H1 (cell line): ENCODE measurements at regions of chr1 and their contacts with region 1.

Region 1: DNA sequence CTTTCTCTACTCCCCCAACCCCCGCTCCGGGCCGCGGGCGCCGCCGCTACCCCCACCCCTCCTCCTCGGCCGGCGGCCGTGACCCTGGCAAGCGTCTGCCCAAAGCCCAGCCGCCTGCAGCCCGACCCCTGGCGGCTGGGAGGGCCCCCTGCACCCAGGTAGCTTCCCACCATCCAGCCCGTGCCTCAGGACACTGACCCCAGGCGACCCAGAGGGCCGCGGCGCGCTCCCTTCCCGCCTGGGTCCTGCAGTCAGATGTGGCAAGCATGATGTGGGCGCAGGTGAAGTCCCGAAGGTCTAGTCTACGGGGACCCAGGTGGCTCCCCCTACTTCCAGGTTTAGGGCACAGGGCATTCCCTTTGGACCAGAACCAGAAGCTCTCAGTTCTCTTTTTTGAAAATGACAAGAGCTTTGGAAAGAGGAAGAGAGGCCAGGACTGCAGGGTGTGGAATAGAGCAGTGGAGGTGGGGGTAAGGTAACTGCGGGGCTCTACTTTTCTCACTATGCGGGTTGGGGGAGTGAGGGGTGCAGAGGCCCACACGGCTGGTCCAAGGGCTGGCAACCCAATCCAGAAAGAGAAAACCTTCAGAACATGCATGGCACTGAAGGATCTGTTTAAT is at the start of gene DENND4B:
- DNase-seq: peak in 1 of 2 experiments; percentile 93
- H3K4me3 ChIP-seq: peak within 1 kb of the TSS; percentile 79 to 87 (median 80)
- H3K27ac ChIP-seq: peak within 1 kb of the TSS; percentile 55; the same call in 1 of the 2 replicates
- H3K4me1 ChIP-seq: peaks cover 0 to 5% (median 2%) of the 10 kb centered on the region in 4 experiments; a peak in 2 of 7 replicates
- H3K27me3 ChIP-seq: no peaks in the 10 kb centered on the region
- CTCF ChIP-seq: peak; percentile 90 to 94 (median 91)
- EP300 ChIP-seq: peak in 1 of 2 experiments; percentile 50; a peak in 1 of 3 replicates
- POLR2A ChIP-seq: no peak
- RAD21 ChIP-seq: peak; percentile 61 to 71
- total RNA-seq, gene DENND4B: 61.1 and 62.8 TPM in 2 replicates

Region 2: DNA sequence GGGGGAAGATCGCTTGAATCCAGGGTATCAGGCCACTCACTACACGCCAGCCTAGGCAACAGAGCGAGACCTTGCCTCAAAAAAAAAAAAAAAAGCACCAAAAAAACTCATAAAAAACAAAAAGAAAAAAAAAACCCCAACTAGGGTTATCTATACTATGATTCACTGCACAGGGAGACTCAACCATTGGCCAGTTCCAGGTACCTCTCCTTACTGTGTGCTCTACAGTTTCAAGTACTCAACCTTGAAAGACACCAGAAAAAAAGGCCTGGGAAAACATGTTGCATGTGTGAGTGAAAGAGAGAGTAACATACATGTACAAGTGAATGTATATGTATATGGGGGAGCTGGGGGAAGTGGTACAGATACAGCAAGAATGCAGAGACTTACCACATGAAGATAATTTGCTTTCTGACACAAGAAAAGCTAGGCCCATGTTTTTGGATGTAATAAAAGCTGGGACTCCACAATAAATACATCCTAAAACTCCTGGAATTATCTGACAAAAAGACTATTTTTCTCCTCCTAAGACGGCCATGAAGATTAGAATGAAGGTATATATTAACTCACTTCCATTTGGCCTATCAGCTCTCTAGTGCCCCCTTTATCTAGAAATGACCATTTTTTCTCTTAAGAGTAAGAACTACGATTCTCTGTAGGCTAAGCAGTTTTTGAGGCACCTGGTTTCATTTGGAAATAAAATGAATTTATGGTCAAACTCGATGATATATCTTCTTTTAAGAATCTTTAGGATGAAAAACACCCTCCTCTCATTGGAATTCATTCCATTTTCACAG is 119.4 kb before region 1 on chr1:
- CTCF ChIA-PET with region 1: interaction called, 10 read pairs
- POLR2A ChIA-PET with region 1: interaction called, 3 read pairs
- DNase-seq: no peak
- H3K4me3 ChIP-seq: no peak overlapping the region
- H3K27ac ChIP-seq: no peak overlapping the region
- H3K4me1 ChIP-seq: no peaks in the 10 kb centered on the region
- H3K27me3 ChIP-seq: no peaks in the 10 kb centered on the region
- CTCF ChIP-seq: peak in 1 of 3 experiments; percentile 20; a peak in 1 of 4 replicates
- EP300 ChIP-seq: no peak
- POLR2A ChIP-seq: no peak
- RAD21 ChIP-seq: no peak

Region 3: GRCh38 chr1:153928791-153929341 is 17.9 kb before region 1 on chr1:
- CTCF ChIA-PET with region 1: interaction called, 10 read pairs
- POLR2A ChIA-PET with region 1: interaction called, 73 read pairs
- DNase-seq: no peak
- H3K4me3 ChIP-seq: no peak overlapping the region
- H3K27ac ChIP-seq: no peak overlapping the region
- H3K4me1 ChIP-seq: peaks cover 0 to 2% (median 0%) of the 10 kb centered on the region in 4 experiments; a peak in 1 of 7 replicates
- H3K27me3 ChIP-seq: no peaks in the 10 kb centered on the region
- CTCF ChIP-seq: no peak
- EP300 ChIP-seq: no peak
- POLR2A ChIP-seq: no peak
- RAD21 ChIP-seq: no peak

Region 4: GRCh38 chr1:153936011-153936802 is 10.5 kb before region 1 on chr1:
- CTCF ChIA-PET with region 1: interaction called, 7 read pairs
- POLR2A ChIA-PET with region 1: interaction called, 60 read pairs
- DNase-seq: no peak
- H3K4me3 ChIP-seq: no peak overlapping the region
- H3K27ac ChIP-seq: no peak overlapping the region
- H3K4me1 ChIP-seq: no peaks in the 10 kb centered on the region
- H3K27me3 ChIP-seq: no peaks in the 10 kb centered on the region
- CTCF ChIP-seq: no peak
- EP300 ChIP-seq: no peak
- POLR2A ChIP-seq: no peak
- RAD21 ChIP-seq: no peak

Region 5: DNA sequence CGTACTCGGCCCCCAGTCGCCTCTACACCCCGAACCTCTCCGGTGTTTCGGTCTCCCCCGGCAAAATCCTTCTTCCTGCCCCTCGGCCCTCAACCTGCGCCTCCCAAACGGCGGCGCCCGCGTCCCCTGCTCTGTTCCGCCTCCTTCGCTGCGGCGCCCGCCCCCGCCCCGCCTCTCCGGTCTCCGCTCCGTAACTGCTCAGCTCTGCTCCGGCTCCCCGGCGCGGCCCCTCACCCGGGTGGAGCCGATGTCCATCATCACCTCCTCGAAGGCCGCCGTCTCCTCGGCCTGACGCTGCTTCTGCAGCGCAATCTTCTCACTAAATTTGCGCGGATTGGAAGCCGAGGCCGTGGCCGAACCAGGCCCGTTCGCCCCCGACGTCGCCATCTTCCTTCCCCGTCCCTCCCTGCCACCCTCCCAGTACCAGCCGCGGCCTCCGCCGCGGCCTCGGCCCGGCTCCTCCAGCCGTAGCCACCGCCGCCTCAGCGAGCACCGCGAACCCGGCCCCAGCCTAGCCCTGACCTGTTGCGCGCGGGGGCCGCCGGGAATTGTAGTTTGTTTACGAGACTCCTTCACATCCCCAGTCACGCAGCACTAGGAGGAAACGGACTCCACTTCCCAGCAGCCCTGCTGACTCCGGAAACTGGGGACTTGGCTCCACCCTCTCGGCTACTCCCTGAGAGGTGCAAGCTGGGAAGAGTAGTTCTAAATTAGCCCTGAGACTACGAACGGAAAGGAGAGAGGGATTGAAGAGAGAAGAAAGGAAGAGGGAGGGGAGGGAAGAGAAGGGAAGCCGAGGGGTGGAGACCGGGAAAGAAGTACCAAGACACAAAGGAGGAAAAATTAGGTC is 11.6 kb after region 1 on chr1 and contains the start of gene CRTC2:
- CTCF ChIA-PET with region 1: interaction called, 31 read pairs
- POLR2A ChIA-PET with region 1: interaction called, 75 read pairs
- DNase-seq: peak; percentile 96 to 97
- H3K4me3 ChIP-seq: peak within 1 kb of the TSS; percentile 82 to 98 (median 88)
- H3K27ac ChIP-seq: peak within 1 kb of the TSS; percentile 77
- H3K4me1 ChIP-seq: peaks cover 6 to 20% (median 12%) of the 10 kb centered on the region in 4 experiments
- H3K27me3 ChIP-seq: no peaks in the 10 kb centered on the region
- CTCF ChIP-seq: no peak
- EP300 ChIP-seq: 0 out of 3 replicates have a peak, but pooled peaks of 1 of the 2 experiments have one; percentile 13
- POLR2A ChIP-seq: peak in 1 of 2 experiments; percentile 37; a peak in 2 of 3 replicates
- RAD21 ChIP-seq: no peak; a peak in 1 of 4 replicates
- total RNA-seq, gene CRTC2: 28.6 and 33.7 TPM in 2 replicates

Region 6: DNA sequence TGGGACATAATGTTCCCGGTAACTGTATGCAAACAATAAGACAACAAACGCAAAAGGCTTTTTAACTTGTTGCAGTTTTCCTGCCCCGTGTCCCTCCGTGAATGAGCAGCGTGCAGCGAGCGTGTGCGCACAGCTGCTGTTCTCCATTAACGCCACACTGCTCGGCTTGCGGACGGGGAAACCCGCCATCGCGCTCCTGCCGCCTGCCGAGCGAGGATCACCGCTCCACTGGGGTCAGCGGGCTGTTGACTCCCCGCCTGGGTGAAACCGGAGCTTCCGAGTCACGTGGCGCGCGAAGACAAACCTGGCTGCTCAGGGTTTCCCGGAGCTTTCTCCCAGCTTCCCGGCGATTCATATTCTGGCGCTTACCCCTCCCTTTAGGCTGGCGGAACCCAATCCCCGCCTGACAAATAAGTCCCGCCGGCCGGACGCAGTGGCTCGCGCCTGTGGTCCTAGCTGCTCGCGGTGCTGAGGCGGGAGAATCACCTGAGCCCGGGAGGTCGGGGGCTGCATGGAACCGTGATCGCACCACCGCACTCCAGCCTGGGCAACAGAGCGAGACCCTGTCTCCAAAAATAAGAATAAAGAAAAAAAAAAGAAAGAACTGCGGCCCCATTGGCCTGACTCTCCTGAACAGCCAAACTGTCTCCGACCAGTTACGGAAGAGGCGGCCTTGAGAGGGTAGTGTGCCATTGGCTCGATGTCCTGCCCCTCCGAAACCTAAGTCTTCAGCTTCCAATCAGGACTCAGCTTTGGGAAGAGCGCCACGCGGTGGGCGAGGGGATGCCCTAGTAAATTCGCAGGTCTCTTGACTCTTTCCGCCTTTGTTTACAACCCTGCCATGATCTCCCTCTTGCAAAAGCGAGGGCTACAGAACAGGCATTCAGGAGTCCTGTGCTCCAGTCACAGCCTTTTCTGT is 20.6 kb after region 1 on chr1 and contains the start of gene CREB3L4:
- CTCF ChIA-PET with region 1: interaction called, 13 read pairs
- POLR2A ChIA-PET with region 1: interaction called, 59 read pairs
- DNase-seq: peak in 1 of 2 experiments; percentile 90
- H3K4me3 ChIP-seq: peak within 1 kb of the TSS; percentile 51 to 77 (median 66)
- H3K27ac ChIP-seq: peak within 1 kb of the TSS; percentile 91
- H3K4me1 ChIP-seq: peaks cover 0 to 12% (median 6%) of the 10 kb centered on the region in 4 experiments; a peak in 5 of 7 replicates
- H3K27me3 ChIP-seq: no peaks in the 10 kb centered on the region
- CTCF ChIP-seq: peak in 2 of 3 experiments; percentile 37 to 51; a peak in 2 of 4 replicates
- EP300 ChIP-seq: no peak
- POLR2A ChIP-seq: peak; percentile 78 to 82
- RAD21 ChIP-seq: peak; percentile 6 to 11; a peak in 1 of 4 replicates
- total RNA-seq, gene CREB3L4: 34.4 and 37.2 TPM in 2 replicates

Region 7: GRCh38 chr1:153977250-153978240 is 30.8 kb after region 1 on chr1 and contains the start of gene JTB:
- CTCF ChIA-PET with region 1: interaction called, 8 read pairs
- POLR2A ChIA-PET with region 1: interaction called, 10 read pairs
- DNase-seq: peak in 1 of 2 experiments; percentile 88
- H3K4me3 ChIP-seq: peak within 1 kb of the TSS; percentile 91 to 99 (median 93)
- H3K27ac ChIP-seq: peak within 1 kb of the TSS; percentile 66
- H3K4me1 ChIP-seq: no peaks in the 10 kb centered on the region; a peak in 1 of 7 replicates
- H3K27me3 ChIP-seq: no peaks in the 10 kb centered on the region
- CTCF ChIP-seq: no peak
- EP300 ChIP-seq: no peak
- POLR2A ChIP-seq: peak; percentile 76 to 78
- RAD21 ChIP-seq: no peak
- total RNA-seq, gene JTB: 91.1 and 93.0 TPM in 2 replicates